ENCODE measurements at regions of chr2 and their contacts with region 1.

Region 1: DNA sequence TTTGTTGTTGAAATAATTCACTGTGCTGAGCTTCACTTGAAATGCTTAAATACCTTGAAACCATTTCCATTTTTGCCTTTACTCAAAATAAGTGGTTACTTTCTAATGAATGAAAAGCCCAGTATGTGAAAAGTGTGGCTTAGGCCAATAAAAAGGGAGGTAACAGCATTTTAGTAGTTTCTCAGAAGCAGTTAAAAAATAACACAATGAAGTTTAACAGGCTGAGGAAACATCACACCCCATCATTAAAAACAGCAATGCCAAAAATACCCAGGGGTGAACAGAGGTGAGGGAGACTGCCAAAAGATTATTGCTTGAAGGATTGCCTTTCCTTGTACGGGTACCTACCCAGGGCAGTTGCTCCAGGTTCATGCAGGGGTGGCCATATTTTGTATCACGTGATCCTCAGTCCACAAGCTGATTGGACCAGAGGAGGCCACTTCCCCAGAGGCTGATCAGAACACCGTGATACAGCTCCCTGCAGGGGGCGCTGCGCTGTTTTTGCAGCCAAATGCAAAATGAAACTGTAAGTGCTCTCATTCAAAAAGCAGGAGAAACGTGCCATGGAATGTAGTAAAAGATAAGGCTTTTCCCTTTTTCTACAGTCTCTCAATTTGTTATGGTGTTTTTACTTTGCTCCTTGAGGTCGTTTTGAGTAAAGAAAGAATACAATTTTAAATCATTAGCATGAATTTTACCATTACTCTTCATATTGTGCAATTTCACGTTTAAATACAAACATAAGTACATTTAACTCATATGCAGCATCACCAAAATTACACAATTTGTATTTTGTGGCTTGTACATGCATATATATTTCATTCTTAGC is 70.2 kb upstream of the SH3BP4 start:
- H3K4me3 Mint-ChIP-seq: no peak overlapping the region
- H3K27ac Mint-ChIP-seq: no peak overlapping the region
- H3K4me1 Mint-ChIP-seq: no peaks in the 10 kb centered on the region
- H3K27me3 Mint-ChIP-seq: no peaks in the 10 kb centered on the region

Region 2: DNA sequence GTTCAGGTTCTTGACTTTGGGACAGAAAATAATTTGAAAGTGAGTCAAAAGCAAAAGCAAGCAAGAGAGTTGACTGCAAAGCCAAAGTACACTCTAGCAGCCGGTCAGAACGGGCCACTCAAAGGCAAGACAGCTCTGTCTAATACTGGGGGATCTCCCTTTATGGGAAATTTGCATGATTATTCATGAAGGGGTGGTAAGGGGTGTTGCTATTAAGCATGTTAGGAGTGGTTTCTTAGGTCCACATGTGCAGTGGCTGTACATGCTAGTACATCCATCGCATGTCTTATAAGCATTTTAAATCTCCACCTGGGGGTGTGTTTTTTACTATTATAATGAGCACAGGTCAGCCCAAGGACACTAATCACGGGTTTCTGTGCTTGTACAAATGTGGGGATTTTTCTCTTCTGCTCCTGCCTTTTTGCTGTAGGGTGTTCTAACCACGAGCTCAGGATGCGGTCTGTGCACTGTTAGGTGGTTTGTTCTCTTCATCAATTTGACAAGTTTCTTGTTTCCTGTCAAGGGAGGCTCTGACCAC is 891.3 kb before region 1 on chr2:
- intact Hi-C with region 1: no loop called
- H3K4me3 Mint-ChIP-seq: no peak overlapping the region
- H3K27ac Mint-ChIP-seq: no peak overlapping the region
- H3K4me1 Mint-ChIP-seq: no peaks in the 10 kb centered on the region
- H3K27me3 Mint-ChIP-seq: peaks cover 15% of the 10 kb centered on the region

Region 3: DNA sequence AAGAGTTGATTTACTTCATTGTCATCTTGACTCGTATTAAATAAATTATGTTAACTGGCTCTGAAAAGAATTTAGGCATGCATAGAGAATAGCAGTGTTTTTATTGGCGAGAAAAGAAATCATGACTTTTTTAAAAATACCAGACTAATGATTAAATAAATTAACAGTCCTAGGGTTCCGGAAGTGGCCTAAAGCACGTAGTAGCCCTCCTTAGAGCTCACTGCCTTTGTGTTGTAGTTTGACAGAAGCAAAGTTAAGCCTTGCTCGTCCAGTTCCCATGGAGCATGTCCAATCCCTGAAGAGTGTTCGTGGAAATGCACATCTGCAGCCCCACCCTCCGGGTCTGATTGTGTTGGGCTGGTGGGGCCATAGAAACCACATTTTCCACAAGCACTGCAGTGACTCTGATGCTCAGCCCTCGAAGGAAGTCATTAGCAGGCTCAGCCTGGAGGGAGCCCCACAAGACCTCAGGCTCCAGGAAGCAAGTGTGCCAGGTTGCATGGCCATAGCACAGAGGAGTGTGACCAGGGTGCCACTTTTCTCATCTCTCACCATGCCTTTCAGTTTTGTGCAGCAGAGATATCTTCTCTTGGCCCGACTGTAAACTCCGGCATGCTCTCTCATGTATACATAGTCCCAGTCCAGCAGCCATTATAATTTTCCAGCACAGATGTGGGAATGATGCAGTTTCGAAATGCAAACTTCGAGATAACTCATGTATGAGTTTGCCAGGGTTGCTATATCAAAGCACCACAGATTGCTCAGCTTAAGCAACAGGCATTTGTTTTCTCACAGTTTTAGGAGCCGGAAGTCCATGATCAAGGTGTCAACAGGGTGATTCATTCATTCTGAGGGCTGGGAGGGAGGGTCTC is 118.4 kb before region 1 on chr2:
- intact Hi-C with region 1: no loop called
- H3K4me3 Mint-ChIP-seq: no peak overlapping the region
- H3K27ac Mint-ChIP-seq: no peak overlapping the region
- H3K4me1 Mint-ChIP-seq: no peaks in the 10 kb centered on the region
- H3K27me3 Mint-ChIP-seq: no peaks in the 10 kb centered on the region

Region 4: DNA sequence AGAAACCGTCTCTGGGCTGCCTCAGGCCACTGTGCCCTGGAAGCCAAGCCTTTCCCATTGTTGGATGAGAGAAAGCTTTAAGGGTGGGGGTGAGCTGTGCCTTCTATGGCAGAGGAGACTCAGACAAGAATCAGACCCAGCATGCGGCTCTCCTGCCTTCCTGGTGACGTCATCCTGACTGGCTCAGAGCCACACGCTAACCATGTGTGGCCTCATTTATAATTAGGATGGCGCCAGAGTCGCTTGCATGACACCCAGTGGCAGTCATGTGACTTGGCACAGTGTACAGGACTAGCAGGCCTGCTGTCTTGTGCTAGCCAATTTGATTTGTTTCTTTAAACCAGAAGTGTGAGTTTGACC is 169.3 kb after region 1 on chr2:
- intact Hi-C with region 1: loop called (anchors 10 kb)
- H3K4me3 Mint-ChIP-seq: no peak overlapping the region
- H3K27ac Mint-ChIP-seq: peak overlapping the region; percentile 67
- H3K4me1 Mint-ChIP-seq: peaks cover 73% of the 10 kb centered on the region
- H3K27me3 Mint-ChIP-seq: peaks cover 8% of the 10 kb centered on the region

Region 5: DNA sequence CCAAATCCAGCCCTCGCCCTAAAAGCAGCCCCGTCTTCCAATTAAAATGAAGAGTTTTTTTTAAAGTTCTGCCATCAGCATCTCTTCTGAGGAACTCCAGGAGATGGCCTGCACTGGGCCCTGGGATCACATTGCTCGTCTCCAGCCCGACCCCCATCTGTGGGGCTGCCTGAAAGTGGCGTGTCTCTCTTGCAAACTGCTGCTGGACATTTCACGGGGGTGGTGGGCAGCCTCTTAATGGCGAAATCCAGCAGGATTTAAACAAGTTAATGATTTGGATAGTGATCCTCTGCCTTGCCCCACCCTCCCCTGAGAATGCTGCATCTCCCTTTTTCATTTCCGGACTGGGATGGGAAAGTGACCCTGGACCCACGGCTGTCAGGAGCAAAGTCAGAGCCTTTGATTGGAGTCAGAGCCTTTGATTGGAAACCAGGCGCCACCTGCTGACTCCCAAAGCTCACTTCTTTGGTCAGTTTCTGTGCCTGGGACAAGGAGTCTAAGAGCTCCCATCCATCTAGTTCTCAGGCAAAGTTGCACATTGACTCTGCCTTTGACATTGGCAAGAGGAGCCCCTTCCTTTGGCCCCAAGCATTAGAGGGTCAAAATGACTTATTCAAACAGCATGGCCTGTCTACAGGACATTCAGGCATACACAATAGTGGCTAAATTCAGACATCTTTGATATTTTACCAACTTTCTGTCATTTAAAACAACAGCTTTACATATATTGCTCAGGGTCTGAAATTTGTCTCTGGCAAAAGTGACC is 225.4 kb after region 1 on chr2:
- intact Hi-C with region 1: loop called (anchors 1 kb)
- H3K4me3 Mint-ChIP-seq: no peak overlapping the region
- H3K27ac Mint-ChIP-seq: no peak overlapping the region
- H3K4me1 Mint-ChIP-seq: no peaks in the 10 kb centered on the region
- H3K27me3 Mint-ChIP-seq: no peaks in the 10 kb centered on the region

Region 6: DNA sequence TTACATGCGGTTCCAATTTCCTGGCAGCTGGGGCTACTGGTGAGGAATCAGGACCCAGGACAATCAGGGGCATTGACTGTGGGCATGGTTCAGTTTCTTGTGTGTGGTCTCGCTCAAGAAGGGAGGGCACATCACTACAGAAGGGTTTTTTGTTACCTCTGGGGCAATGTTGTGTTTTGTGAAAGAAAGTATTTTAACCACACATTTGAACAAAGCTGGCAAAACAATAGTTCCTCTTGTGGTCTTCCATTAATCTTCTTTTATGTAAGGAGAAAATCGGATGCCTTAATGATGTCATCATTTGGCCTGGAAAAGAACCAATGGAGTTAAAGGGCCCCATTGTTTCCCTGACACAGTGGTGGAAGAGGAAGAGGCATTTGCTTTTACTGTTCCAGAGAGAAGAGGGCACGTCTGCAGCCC is 267.6 kb after region 1 on chr2:
- intact Hi-C with region 1: no loop called
- H3K4me3 Mint-ChIP-seq: no peak overlapping the region
- H3K27ac Mint-ChIP-seq: no peak overlapping the region
- H3K4me1 Mint-ChIP-seq: no peaks in the 10 kb centered on the region
- H3K27me3 Mint-ChIP-seq: no peaks in the 10 kb centered on the region

Region 7: GRCh38 chr2:236338495-236339184 is 1457.0 kb after region 1 on chr2:
- intact Hi-C with region 1: no loop called
- H3K4me3 Mint-ChIP-seq: no peak overlapping the region
- H3K27ac Mint-ChIP-seq: no peak overlapping the region
- H3K4me1 Mint-ChIP-seq: peaks cover 8% of the 10 kb centered on the region
- H3K27me3 Mint-ChIP-seq: peaks cover 11% of the 10 kb centered on the region